Activated CD4-positive, alpha-beta T cell treated with anti-CD3 and anti-CD28 coated beads for 36 hours (primary cell): ENCODE measurements at regions of chr12 and their contacts with region 1.

Region 1: GRCh38 chr12:45543906-45544315 is 185.6 kb upstream of the ARID2 start:
- DNase-seq: peak; percentile 65
- ATAC-seq: peak; percentile 97
- H3K4me3 Mint-ChIP-seq: no peak overlapping the region
- H3K27ac Mint-ChIP-seq: no peak overlapping the region
- H3K4me1 Mint-ChIP-seq: peaks cover 4% of the 10 kb centered on the region
- H3K27me3 Mint-ChIP-seq: peaks cover 4% of the 10 kb centered on the region

Region 2: GRCh38 chr12:45170456-45171042 is 373.4 kb before region 1 on chr12:
- CTCF ChIA-PET with region 1: interaction called, 11 read pairs
- POLR2A ChIA-PET with region 1: no interaction called
- intact Hi-C with region 1: no loop called
- DNase-seq: peak; percentile 92
- ATAC-seq: no peak
- H3K4me3 Mint-ChIP-seq: no peak overlapping the region
- H3K27ac Mint-ChIP-seq: no peak overlapping the region
- H3K4me1 Mint-ChIP-seq: no peaks in the 10 kb centered on the region
- H3K27me3 Mint-ChIP-seq: no peaks in the 10 kb centered on the region

Region 3: DNA sequence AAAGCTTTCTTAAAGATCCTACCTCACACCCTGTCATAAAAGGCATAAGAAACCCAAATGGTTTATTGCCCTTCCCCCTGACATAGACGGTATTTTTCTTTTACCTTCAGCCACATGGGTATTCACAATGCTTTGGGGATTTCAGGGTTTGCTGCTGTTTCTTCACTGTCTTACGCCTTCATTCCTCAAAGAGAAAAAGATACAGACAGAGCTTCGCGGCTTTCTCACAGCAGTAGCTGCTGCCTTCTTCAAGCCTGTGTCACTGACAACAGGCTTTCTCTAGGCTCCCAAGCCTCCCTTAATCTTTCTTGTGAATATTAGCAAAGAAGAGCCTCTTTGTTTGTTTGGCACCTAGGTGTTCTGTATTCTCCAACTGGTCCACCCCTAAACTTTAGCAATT is 11.8 kb before region 1 on chr12:
- CTCF ChIA-PET with region 1: interaction called, 17 read pairs
- POLR2A ChIA-PET with region 1: no interaction called
- intact Hi-C with region 1: no loop called
- DNase-seq: no peak
- ATAC-seq: no peak
- H3K4me3 Mint-ChIP-seq: no peak overlapping the region
- H3K27ac Mint-ChIP-seq: no peak overlapping the region
- H3K4me1 Mint-ChIP-seq: no peaks in the 10 kb centered on the region
- H3K27me3 Mint-ChIP-seq: peaks cover 11% of the 10 kb centered on the region

Region 4: DNA sequence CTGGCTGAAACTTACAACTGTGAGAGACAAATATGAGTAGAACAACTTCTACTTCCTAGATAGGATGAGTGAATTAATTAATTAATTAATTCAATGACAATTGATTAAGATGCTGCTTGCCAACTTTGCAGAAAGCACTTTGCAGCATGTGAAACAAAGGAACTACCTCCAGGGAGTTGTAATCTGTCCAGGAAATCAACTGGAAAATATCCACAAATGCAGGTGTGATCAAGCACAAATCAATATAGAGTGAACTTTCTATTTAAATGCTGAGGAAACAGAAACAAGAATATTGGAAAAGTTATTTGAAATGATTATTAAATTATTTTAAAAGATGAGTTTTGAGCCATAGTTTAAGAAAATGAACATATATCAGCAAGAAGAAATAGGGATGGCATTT is 21.7 kb after region 1 on chr12:
- CTCF ChIA-PET with region 1: interaction called, 12 read pairs
- POLR2A ChIA-PET with region 1: no interaction called
- intact Hi-C with region 1: no loop called
- DNase-seq: no peak
- ATAC-seq: no peak
- H3K4me3 Mint-ChIP-seq: no peak overlapping the region
- H3K27ac Mint-ChIP-seq: no peak overlapping the region
- H3K4me1 Mint-ChIP-seq: no peaks in the 10 kb centered on the region
- H3K27me3 Mint-ChIP-seq: no peaks in the 10 kb centered on the region

Region 5: GRCh38 chr12:45745861-45746277 is 202.0 kb after region 1 on chr12:
- CTCF ChIA-PET with region 1: interaction called, 10 read pairs
- POLR2A ChIA-PET with region 1: no interaction called
- intact Hi-C with region 1: loop called (anchors 1 to 5 kb)
- DNase-seq: no peak
- ATAC-seq: peak; percentile 61
- H3K4me3 Mint-ChIP-seq: no peak overlapping the region
- H3K27ac Mint-ChIP-seq: no peak overlapping the region
- H3K4me1 Mint-ChIP-seq: peaks cover 50% of the 10 kb centered on the region
- H3K27me3 Mint-ChIP-seq: no peaks in the 10 kb centered on the region

Region 6: GRCh38 chr12:45863332-45863731 is 319.4 kb after region 1 on chr12:
- CTCF ChIA-PET with region 1: no interaction called
- POLR2A ChIA-PET with region 1: no interaction called
- intact Hi-C with region 1: no loop called
- DNase-seq: no peak
- ATAC-seq: no peak
- H3K4me3 Mint-ChIP-seq: no peak overlapping the region
- H3K27ac Mint-ChIP-seq: no peak overlapping the region
- H3K4me1 Mint-ChIP-seq: no peaks in the 10 kb centered on the region
- H3K27me3 Mint-ChIP-seq: no peaks in the 10 kb centered on the region

Region 7: GRCh38 chr12:45907955-45908354 is 364.0 kb after region 1 on chr12:
- CTCF ChIA-PET with region 1: interaction called, 6 read pairs
- POLR2A ChIA-PET with region 1: no interaction called
- intact Hi-C with region 1: loop called in 1 of 2 experiments (anchors 10 kb)
- DNase-seq: no peak
- ATAC-seq: no peak
- H3K4me3 Mint-ChIP-seq: no peak overlapping the region
- H3K27ac Mint-ChIP-seq: no peak overlapping the region
- H3K4me1 Mint-ChIP-seq: no peaks in the 10 kb centered on the region
- H3K27me3 Mint-ChIP-seq: no peaks in the 10 kb centered on the region

Region 8: DNA sequence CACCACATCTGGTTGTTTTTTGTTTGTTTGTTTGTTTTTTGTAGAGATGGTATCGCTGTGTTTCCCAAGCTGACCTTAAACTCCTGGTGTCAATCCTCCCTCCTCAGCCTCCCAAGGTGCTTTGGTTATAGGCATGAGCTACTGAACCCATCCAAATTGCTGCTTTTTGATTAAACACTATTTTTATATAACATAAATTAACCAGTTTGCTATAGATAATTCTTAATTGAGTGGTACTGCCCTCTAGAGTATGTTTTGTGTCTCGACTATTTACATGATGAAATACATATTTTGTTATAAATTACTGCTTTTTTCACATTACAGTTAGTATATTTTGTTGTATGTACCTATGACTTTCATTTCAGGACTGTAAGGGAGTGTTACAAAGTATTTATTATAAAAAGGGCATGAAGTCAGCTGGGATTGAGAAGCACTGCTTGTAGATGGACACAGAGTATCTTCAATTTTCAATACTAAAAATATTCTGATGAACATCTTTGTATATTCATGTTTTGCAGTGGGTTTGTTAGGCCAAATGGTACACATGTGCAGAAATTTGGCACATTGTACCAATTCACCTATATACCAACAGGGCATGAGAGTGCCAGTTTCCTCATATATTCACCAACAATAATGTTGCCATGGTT is 461.4 kb after region 1 on chr12:
- CTCF ChIA-PET with region 1: interaction called, 4 read pairs
- POLR2A ChIA-PET with region 1: no interaction called
- intact Hi-C with region 1: loop called in 1 of 2 experiments (anchors 5 kb)
- DNase-seq: no peak
- ATAC-seq: no peak
- H3K4me3 Mint-ChIP-seq: no peak overlapping the region
- H3K27ac Mint-ChIP-seq: no peak overlapping the region
- H3K4me1 Mint-ChIP-seq: no peaks in the 10 kb centered on the region
- H3K27me3 Mint-ChIP-seq: no peaks in the 10 kb centered on the region